Heart left ventricle (tissue), 16 donors: ENCODE measurements at regions of chr16 and their contacts with region 1.

Region 1: DNA sequence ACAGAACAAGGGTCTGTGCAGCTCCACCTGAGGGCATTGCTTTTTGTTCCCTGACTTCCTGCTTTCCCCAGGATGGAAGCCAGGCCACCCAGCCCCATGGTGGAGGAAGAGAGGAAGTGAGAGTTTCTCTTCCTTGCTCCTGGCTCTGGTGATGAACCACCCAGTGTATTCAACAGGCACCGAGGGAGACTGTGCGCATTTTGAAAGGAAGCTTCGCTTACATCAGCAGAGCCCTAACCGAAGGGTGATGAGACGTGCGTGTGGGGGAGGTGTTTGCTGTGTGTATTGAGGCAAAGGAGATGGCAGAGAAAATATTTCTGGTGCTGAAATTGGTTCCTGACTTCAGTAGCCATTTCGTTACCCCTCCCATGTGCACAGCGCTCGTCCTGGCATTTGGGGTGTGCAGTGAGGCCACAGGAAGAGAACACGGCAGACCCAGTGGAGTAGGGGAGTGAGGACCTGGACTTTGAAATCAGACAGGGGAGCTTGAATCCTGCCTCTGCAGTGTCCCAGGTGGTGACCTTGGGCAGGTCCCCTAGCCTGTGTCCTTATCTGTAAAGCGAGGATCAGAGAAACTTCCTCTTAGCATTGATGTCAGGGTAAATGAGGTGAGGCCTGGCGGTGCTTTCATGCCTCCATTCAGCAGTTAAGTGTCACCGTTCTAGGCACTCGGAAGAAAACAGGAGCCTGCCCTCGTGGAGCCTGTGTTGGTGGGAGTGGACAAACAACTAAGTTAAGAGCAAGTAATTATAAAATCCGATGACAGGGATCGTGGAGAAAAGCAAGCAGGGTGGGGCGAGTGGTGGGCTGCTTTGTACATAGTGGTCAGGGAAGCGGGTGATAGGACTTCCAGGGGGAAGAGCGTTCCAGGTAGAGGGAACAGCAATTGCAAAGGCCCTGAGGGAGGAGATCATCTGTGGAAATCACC is 7.4 kb downstream of the CMIP start:
- DNase-seq: peak in 3 of 5 donors; percentile 59 to 69 (median 61)
- ATAC-seq: peak; percentile 52 to 87 (median 65)
- H3K4me3 ChIP-seq: peak overlapping the region in 1 of 12 donors; percentile 12
- H3K27ac ChIP-seq: peak overlapping the region in 8 of 12 donors; percentile 13 to 89 (median 44)
- H3K4me1 ChIP-seq: peaks cover 0 to 85% (median 37%) of the 10 kb centered on the region in 12 donors
- H3K27me3 ChIP-seq: no peaks in the 10 kb centered on the region
- CTCF ChIP-seq: no peak
- POLR2A ChIP-seq: no peak

Region 2: GRCh38 chr16:81279395-81279794 is 172.6 kb before region 1 on chr16:
- intact Hi-C with region 1: no loop called
- DNase-seq: no peak
- ATAC-seq: no peak
- H3K4me3 ChIP-seq: no peak overlapping the region
- H3K27ac ChIP-seq: no peak overlapping the region
- H3K4me1 ChIP-seq: no peaks in the 10 kb centered on the region
- H3K27me3 ChIP-seq: no peaks in the 10 kb centered on the region
- CTCF ChIP-seq: no peak
- POLR2A ChIP-seq: no peak

Region 3: DNA sequence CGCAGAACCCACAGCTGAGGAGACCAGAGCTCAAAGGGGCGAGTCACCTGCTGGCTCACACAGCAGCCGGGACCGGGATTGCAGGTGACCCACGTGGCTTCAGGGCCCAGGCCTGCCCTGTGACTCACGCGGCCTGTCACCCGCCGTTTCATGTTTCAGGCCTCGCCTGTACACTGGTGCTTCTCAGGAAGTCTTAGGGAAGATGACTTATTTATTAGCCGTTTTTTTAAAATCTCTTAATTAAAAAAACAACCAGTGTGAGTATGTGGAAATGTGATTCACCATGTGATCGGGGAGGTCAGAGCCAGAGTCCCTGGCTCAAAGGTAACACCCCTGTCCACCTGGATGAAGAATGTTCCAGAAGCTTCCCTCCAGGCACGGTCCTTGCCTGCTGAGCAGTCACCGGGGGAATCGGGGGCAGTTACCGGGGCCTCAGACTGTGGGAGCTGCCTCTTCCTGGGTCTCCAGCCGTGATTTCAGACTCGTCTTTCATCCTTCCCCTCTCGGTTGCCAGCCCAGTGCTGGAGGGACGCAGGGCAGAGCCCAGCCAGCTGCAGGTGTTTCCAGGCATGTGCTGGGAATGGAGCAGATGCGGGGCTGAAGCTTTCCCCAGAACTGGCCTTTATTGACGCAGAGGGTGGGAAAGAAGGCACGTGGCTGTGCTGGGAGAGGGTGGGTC is 41.9 kb after region 1 on chr16:
- intact Hi-C with region 1: loop called in 2 of 10 experiments (anchors 5 kb)
- DNase-seq: peak in 1 of 5 donors; percentile 24
- ATAC-seq: peak; percentile 30 to 85 (median 54)
- H3K4me3 ChIP-seq: no peak overlapping the region
- H3K27ac ChIP-seq: peak overlapping the region in 11 of 12 donors; percentile 13 to 81 (median 74)
- H3K4me1 ChIP-seq: peaks cover 3 to 96% (median 47%) of the 10 kb centered on the region in 12 donors
- H3K27me3 ChIP-seq: no peaks in the 10 kb centered on the region
- CTCF ChIP-seq: no peak
- POLR2A ChIP-seq: no peak